ENCODE measurements at regions of chr18 and their contacts with region 1.

Region 1: DNA sequence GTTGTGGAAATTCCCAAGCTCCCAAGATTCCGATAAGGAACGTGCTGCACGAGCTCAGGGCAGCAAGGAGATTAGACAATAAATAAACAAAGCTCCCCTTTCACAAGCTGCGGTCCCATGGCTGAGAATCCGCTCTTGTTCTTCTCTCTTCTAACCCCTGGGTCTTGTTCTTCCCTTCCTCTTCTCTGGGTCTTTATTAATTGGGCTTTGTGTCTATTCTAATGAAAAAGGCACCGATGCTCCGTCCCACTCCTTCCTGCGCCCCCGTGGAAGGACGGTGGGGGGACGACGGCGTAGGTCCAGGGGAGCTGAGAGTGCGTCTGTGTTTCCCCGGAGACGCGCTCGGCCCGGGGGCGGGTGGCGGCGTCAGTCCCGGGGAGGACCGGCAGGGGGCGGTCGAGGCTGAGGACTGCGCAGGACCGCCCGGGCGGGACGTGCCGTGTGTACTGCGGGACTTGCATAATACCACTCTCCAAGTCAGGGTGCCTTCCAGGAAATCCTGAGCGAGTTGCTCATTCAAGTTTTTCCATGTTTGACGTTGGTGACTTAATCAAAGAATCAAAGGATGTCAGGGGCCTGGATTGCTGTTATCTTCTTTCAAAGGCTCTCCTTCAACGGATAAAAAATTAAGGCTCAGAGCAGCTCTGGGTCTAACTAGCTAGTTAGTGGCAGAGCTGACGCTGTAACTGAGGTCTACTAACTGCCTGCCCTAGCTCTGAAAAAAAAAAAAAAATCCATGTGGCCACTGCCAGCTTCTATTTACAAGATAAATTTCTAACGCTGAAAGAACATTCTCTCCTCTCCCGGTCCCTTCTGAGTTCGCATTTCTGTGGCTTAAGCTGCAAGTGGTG is 321.4 kb downstream of the TGIF1 start:
- DNase-seq: peak; percentile 73 to 91
- ATAC-seq: peak; percentile 98 to 99
- H3K4me3 ChIP-seq: peak overlapping the region; percentile 32
- H3K27ac ChIP-seq: peak overlapping the region; percentile 86 to 96
- H3K4me1 ChIP-seq: peaks cover 34% of the 10 kb centered on the region
- CTCF ChIP-seq: peak; percentile 75
- EP300 ChIP-seq: peak in 1 of 2 experiments; percentile 59; a peak in 1 of 5 replicates
- POLR2A ChIP-seq: no peak
- RAD21 ChIP-seq: peak; percentile 73 to 94

Region 2: GRCh38 chr18:2564373-2564772 is 1207.0 kb before region 1 on chr18:
- CTCF ChIA-PET with region 1: no interaction called
- POLR2A ChIA-PET with region 1: no interaction called
- DNase-seq: no peak
- ATAC-seq: no peak
- H3K4me3 ChIP-seq: no peak overlapping the region
- H3K27ac ChIP-seq: no peak overlapping the region
- H3K4me1 ChIP-seq: peaks cover 2% of the 10 kb centered on the region; the same call in 1 of the 3 replicates
- CTCF ChIP-seq: no peak
- EP300 ChIP-seq: no peak
- POLR2A ChIP-seq: no peak
- RAD21 ChIP-seq: no peak

Region 3: DNA sequence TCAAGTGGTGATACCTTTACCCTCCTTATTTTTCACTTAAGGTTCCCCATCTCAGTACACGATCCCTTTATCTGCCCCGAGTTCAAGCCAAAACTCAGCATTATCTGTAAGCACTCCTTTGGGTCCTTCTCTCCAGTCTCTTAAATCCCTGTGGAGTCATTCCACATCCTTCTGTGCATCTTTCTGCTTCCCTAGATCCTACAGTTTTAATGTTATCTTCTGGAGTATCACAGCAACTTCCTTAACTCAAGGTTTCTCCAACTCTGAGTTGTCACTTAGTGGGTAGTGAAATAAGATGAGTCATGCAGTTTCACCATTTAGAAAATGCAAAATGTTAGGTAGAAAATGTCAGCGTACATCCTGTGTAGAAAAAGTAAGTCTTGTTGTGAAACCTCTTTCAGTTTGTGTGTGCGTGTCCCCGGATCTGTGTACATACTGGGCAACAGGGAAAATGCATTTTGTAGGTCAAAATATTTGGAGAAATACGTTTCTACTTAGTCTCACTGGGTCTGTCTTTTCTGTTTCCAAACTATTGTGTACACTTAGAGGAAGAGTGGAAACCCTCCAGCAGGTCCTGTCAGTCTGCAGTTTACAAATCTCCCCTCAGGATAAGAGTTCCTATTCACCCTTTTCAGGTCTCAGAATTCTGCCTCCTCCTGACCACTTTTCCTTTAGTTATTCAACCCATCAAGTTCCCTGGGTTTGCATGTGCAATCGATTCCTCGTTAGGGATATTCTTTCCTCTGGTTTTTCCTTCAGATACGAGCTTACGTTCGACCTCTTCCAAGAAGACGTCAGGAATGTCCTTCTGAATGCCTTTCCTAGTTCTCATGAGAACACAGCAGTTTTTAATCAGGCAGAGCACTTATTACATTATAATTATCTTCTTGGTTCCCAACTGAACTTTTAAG is 166.6 kb before region 1 on chr18:
- CTCF ChIA-PET with region 1: no interaction called
- POLR2A ChIA-PET with region 1: no interaction called
- DNase-seq: peak in 1 of 2 experiments; percentile 94
- ATAC-seq: peak; percentile 48 to 60
- H3K4me3 ChIP-seq: peak overlapping the region; percentile 46
- H3K27ac ChIP-seq: peak overlapping the region; percentile 99 to 100
- H3K4me1 ChIP-seq: peaks cover 58% of the 10 kb centered on the region
- CTCF ChIP-seq: no peak
- EP300 ChIP-seq: peak; percentile 87 to 95; a peak in 4 of 5 replicates
- POLR2A ChIP-seq: no peak
- RAD21 ChIP-seq: no peak; a peak in 1 of 5 replicates

Region 4: DNA sequence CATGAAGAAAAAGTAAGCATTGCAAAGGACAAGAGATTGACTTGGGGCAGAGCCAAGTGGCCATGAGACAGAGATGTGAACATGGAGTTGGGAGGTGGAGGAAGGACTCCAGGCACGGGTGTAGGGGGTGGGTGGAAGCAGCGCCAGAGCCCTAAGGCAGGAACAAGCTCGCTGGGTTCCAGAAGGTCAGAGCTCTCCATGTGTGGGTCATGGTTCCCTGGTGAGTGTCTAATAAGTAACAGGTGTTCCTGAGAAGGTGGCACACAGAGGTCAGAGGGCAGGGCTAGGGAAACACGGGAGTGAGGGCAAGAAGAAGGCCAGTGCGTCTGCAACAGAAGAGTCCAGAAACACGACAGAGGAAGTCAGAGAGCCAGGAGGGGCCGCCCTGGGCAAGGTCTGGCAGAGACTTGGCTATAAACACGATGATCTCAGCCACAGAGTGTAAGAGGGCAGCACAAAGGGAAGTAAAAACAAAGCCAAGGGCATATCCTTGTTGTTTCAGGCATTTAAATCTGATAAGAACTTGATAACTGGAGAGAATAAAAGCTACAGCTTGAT is 60.6 kb before region 1 on chr18:
- CTCF ChIA-PET with region 1: interaction called, 13 read pairs
- POLR2A ChIA-PET with region 1: no interaction called
- DNase-seq: peak; percentile 22 to 78
- ATAC-seq: peak; percentile 92 to 93
- H3K4me3 ChIP-seq: no peak overlapping the region
- H3K27ac ChIP-seq: peak overlapping the region; percentile 74 to 75
- H3K4me1 ChIP-seq: peaks cover 34% of the 10 kb centered on the region
- CTCF ChIP-seq: no peak
- EP300 ChIP-seq: peak; percentile 23 to 55; a peak in 2 of 5 replicates
- POLR2A ChIP-seq: no peak
- RAD21 ChIP-seq: peak; percentile 2 to 26; a peak in 3 of 5 replicates

Region 5: GRCh38 chr18:3758531-3758930 is 12.8 kb before region 1 on chr18:
- CTCF ChIA-PET with region 1: interaction called, 10 read pairs
- POLR2A ChIA-PET with region 1: no interaction called
- DNase-seq: peak in 1 of 2 experiments; percentile 64
- ATAC-seq: peak in 1 of 2 experiments; percentile 50; a peak in 2 of 6 replicates
- H3K4me3 ChIP-seq: no peak overlapping the region
- H3K27ac ChIP-seq: no peak overlapping the region
- H3K4me1 ChIP-seq: no peaks in the 10 kb centered on the region
- CTCF ChIP-seq: no peak
- EP300 ChIP-seq: no peak
- POLR2A ChIP-seq: no peak
- RAD21 ChIP-seq: no peak

Region 6: DNA sequence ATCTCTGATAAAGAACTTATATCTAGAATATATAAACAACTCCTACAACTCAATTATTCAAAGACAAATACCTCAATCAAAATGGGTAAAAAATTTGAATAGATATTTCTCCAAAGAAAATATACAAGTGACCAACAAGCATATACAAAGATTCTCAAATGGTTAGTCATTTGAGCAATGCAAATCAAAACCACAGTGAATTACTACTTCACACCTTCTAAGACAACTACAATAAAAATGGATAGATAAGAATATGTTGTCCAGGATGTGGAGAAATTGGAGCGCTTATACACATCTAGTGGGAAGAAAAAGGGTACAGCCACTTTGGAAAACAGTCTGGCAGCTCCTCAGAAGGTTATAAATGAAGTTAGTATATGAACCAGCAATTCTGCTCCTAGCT is 11.6 kb after region 1 on chr18:
- CTCF ChIA-PET with region 1: interaction called, 17 read pairs
- POLR2A ChIA-PET with region 1: no interaction called
- DNase-seq: no peak
- ATAC-seq: no peak
- H3K4me3 ChIP-seq: no peak overlapping the region
- H3K27ac ChIP-seq: no peak overlapping the region
- H3K4me1 ChIP-seq: peaks cover 5% of the 10 kb centered on the region; the same call in 1 of the 3 replicates
- CTCF ChIP-seq: no peak
- EP300 ChIP-seq: no peak
- POLR2A ChIP-seq: no peak
- RAD21 ChIP-seq: no peak

Region 7: DNA sequence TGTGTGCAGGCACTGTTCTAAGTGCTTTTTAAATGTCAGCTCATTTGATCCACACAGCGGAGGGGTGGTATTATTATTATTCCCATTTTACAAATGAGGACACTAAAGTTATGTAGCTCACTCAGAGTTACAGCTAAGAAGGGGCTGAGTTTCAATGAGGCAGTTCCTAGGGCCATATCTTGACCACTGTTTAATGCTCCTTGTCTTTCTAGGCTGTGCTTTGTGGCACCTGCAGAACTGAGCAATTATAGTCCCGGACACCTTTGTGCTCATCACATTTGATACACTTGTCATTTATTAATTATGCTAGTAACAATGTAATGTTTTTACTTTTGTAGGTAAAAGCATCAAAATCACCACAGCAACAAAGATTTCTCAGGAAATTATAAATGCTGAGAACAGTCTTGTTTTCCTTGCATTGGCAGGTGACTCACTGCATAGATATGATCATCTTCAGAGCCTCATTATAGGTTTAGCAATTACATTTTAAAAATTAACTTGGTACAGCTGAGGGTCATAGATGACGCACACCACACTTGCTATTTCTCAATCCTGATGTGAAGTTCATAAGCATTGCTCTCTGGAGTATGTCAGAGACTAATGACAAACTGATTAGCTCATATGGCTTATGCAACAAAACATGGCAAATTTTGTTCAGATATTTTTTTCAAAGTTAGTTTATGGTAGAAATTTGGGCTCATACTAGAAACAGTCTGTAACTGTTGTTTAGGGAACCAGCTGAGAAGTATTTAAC is 45.4 kb after region 1 on chr18:
- CTCF ChIA-PET with region 1: interaction called, 11 read pairs
- POLR2A ChIA-PET with region 1: no interaction called
- DNase-seq: peak; percentile 22 to 89
- ATAC-seq: peak; percentile 87 to 96
- H3K4me3 ChIP-seq: no peak overlapping the region
- H3K27ac ChIP-seq: peak overlapping the region; percentile 95 to 96
- H3K4me1 ChIP-seq: peaks cover 44% of the 10 kb centered on the region
- CTCF ChIP-seq: no peak
- EP300 ChIP-seq: peak; percentile 97 to 98
- POLR2A ChIP-seq: no peak
- RAD21 ChIP-seq: peak; percentile 5 to 54; a peak in 4 of 5 replicates

Region 8: GRCh38 chr18:3869848-3870247 is 98.5 kb after region 1 on chr18:
- CTCF ChIA-PET with region 1: interaction called, 35 read pairs
- POLR2A ChIA-PET with region 1: interaction called, 3 read pairs
- DNase-seq: peak; percentile 19 to 77
- ATAC-seq: peak; percentile 71 to 82; a peak in 4 of 6 replicates
- H3K4me3 ChIP-seq: no peak overlapping the region
- H3K27ac ChIP-seq: peak overlapping the region; percentile 11 to 76; a peak in 3 of 6 replicates
- H3K4me1 ChIP-seq: peaks cover 11% of the 10 kb centered on the region; the same call in 2 of the 3 replicates
- CTCF ChIP-seq: peak; percentile 52
- EP300 ChIP-seq: no peak
- POLR2A ChIP-seq: no peak
- RAD21 ChIP-seq: peak; percentile 78 to 80

Region 9: DNA sequence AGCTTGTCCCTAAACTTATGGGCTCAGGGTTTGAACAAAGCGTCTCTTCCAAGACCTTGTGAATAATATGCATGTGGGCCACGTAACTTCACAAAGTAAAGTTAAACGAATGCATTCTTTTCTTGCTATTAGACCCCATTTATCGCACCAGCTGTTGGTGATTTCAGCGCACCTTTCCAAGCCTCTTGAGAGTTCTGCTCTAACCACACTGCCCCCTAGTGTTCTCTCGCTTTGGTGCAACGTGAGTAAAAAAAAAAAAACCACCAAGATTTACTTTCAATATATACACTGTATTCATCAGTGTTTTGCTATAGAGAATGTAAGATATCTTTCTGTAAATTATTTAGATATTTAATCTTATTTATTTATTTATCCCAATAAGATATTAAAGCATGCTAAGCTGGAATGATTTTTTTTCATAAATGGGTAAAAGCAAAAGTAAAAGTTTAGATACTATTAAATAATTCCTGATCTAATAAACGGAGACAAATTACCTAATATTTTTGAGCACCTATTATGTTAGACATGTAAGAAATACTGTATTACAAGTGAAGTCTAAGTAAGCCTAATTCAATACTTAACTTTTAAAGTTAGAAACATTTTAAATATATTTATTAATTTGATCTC is 224.2 kb after region 1 on chr18:
- CTCF ChIA-PET with region 1: interaction called, 45 read pairs
- POLR2A ChIA-PET with region 1: interaction called, 4 read pairs
- DNase-seq: peak in 1 of 2 experiments; percentile 79
- ATAC-seq: peak; percentile 19 to 53; a peak in 3 of 6 replicates
- H3K4me3 ChIP-seq: no peak overlapping the region
- H3K27ac ChIP-seq: peak overlapping the region; percentile 49 to 83
- H3K4me1 ChIP-seq: peaks cover 19% of the 10 kb centered on the region
- CTCF ChIP-seq: peak; percentile 77
- EP300 ChIP-seq: no peak
- POLR2A ChIP-seq: no peak
- RAD21 ChIP-seq: peak; percentile 74 to 75

Measured in A549 (cell line).